Activated CD4-positive, alpha-beta T cell treated with anti-CD3 and anti-CD28 coated beads, Interleukin-2, amount 10 ng/mL, durations not matched to agents 24 days and 14 days (primary cell): ENCODE measurements at regions of chr11 and their contacts with region 1.

Region 1: DNA sequence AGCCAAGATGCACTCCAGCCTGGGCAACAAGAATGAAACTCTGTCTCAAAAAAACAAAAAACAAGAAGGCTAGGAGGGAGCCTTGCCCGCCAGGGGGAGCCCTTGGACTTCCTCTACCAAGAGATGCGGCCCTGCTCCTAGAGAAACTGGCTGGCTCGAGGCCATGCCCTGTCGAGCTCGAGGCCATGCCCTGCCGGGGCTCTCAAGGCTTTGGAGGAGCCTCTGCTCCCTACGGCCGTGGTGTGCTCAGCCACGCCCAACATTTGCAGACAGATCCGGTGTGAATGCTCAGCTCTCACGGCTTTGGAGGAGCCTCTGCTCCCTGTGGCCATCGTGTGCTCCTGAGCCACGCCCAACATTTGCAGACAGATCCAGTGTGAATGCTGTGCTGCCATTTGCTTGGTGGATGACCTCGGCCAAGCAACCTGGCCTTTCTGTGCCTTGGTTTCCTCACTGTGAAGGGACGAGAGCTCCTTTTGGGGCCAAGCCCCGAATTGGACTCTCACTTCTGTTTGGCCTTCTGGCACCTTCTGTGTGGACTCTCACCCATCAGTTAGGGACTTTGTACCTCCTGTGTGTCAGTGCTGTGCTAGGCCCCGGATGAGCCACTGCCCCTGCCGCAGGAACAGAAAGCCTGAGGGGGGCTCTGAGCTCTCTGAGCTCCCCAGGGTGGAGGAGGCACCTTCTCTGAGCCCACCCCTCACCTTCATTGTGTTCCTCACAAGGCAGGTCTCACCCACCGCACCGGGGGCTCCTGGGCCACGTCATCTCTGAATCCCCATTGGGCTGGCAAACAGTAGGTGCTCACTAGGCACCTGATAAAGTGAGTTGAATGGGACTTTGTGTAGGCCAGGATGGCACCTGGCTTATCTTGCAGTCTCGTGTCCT is 14.1 kb downstream of the C11orf24 start:
- DNase-seq: peak; percentile 97
- H3K4me3 Mint-ChIP-seq: no peak overlapping the region
- H3K27ac Mint-ChIP-seq: no peak overlapping the region
- H3K4me1 Mint-ChIP-seq: peaks cover 4% of the 10 kb centered on the region
- H3K27me3 Mint-ChIP-seq: peaks cover 4% of the 10 kb centered on the region

Region 2: GRCh38 chr11:68076371-68077042 is 181.2 kb before region 1 on chr11:
- intact Hi-C with region 1: no loop called
- DNase-seq: no peak
- H3K4me3 Mint-ChIP-seq: no peak overlapping the region
- H3K27ac Mint-ChIP-seq: no peak overlapping the region
- H3K4me1 Mint-ChIP-seq: no peaks in the 10 kb centered on the region
- H3K27me3 Mint-ChIP-seq: no peaks in the 10 kb centered on the region

Region 3: GRCh38 chr11:68297812-68298658 is 40.3 kb after region 1 on chr11:
- intact Hi-C with region 1: loop called (anchors 1 kb)
- DNase-seq: peak; percentile 94
- H3K4me3 Mint-ChIP-seq: no peak overlapping the region
- H3K27ac Mint-ChIP-seq: no peak overlapping the region
- H3K4me1 Mint-ChIP-seq: peaks cover 4% of the 10 kb centered on the region
- H3K27me3 Mint-ChIP-seq: peaks cover 4% of the 10 kb centered on the region

Region 4: GRCh38 chr11:68383976-68384501 is 126.3 kb after region 1 on chr11:
- intact Hi-C with region 1: loop called (anchors 5 kb)
- DNase-seq: peak; percentile 91
- H3K4me3 Mint-ChIP-seq: no peak overlapping the region
- H3K27ac Mint-ChIP-seq: no peak overlapping the region
- H3K4me1 Mint-ChIP-seq: peaks cover 28% of the 10 kb centered on the region
- H3K27me3 Mint-ChIP-seq: no peaks in the 10 kb centered on the region

Region 5: GRCh38 chr11:68447015-68447801 is 189.5 kb after region 1 on chr11:
- intact Hi-C with region 1: loop called (anchors 2 kb)
- DNase-seq: peak; percentile 93
- H3K4me3 Mint-ChIP-seq: no peak overlapping the region
- H3K27ac Mint-ChIP-seq: no peak overlapping the region
- H3K4me1 Mint-ChIP-seq: peaks cover 6% of the 10 kb centered on the region
- H3K27me3 Mint-ChIP-seq: no peaks in the 10 kb centered on the region